ENCODE measurements at regions of chr11 and their contacts with region 1.

Region 1: DNA sequence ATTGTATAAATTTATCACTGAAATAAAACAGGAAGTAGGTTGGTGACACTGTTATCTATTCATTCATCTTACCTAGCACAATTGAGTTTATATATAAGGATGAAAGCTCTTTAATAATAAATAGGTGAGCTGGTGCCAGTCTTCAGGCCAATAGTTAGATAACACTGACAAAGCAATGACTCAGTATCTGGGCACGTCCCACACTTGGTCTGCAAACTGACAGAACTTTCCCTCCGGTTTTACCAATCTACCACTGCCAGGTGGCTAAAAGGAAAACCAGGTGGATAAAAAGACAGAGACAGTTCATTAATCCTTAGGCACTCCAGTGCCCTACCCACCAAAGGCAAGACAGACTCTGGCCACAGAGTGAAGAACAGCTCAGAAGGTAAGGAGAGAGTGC is 17.6 kb downstream of the DDB1 start:
- DNase-seq: no peak
- H3K4me3 ChIP-seq: no peak overlapping the region
- H3K27ac ChIP-seq: no peak overlapping the region
- H3K4me1 ChIP-seq: no peaks in the 10 kb centered on the region
- H3K27me3 ChIP-seq: no peaks in the 10 kb centered on the region
- CTCF ChIP-seq: no peak

Region 2: GRCh38 chr11:60334005-60334620 is 981.1 kb before region 1 on chr11:
- CTCF ChIA-PET with region 1: no interaction called
- POLR2A ChIA-PET with region 1: no interaction called
- intact Hi-C with region 1: no loop called
- DNase-seq: peak; percentile 73
- H3K4me3 ChIP-seq: no peak overlapping the region
- H3K27ac ChIP-seq: no peak overlapping the region
- H3K4me1 ChIP-seq: no peaks in the 10 kb centered on the region
- H3K27me3 ChIP-seq: no peaks in the 10 kb centered on the region
- CTCF ChIP-seq: peak; percentile 84

Region 3: GRCh38 chr11:60378354-60378753 is 936.9 kb before region 1 on chr11 and contains the start of gene MS4A7:
- CTCF ChIA-PET with region 1: no interaction called
- POLR2A ChIA-PET with region 1: no interaction called
- intact Hi-C with region 1: no loop called
- DNase-seq: no peak
- H3K4me3 ChIP-seq: no peak within 1 kb of the TSS
- H3K27ac ChIP-seq: no peak within 1 kb of the TSS
- H3K4me1 ChIP-seq: no peaks in the 10 kb centered on the region
- H3K27me3 ChIP-seq: peaks cover 19% of the 10 kb centered on the region
- CTCF ChIP-seq: no peak
- total RNA-seq, gene MS4A7: not detected in 2 replicates

Region 4: GRCh38 chr11:61277186-61278000 is 37.9 kb before region 1 on chr11:
- CTCF ChIA-PET with region 1: interaction called, 20 read pairs
- POLR2A ChIA-PET with region 1: no interaction called
- intact Hi-C with region 1: no loop called
- DNase-seq: no peak
- H3K4me3 ChIP-seq: no peak overlapping the region
- H3K27ac ChIP-seq: no peak overlapping the region
- H3K4me1 ChIP-seq: no peaks in the 10 kb centered on the region
- H3K27me3 ChIP-seq: no peaks in the 10 kb centered on the region
- CTCF ChIP-seq: no peak

Region 5: DNA sequence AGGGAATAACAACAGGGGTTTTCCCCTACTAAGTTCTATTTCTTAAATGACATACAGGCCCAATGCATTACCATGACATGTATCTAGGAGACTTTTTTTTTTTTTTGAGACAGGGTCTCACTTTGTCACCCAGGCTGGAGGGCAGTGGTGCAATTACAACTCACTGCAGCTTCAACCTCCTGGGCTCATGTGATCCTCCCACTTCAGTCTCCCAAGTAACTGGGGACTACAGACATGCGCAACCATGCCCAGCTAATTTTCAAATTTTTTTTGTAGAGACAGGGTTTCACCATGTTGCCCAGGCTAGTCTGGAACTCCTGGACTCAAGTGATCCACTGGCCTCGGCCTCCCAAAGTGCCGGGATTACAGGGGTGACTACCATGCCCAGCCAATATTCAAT is 107.0 kb after region 1 on chr11:
- CTCF ChIA-PET with region 1: no interaction called
- POLR2A ChIA-PET with region 1: no interaction called
- intact Hi-C with region 1: no loop called
- DNase-seq: no peak
- H3K4me3 ChIP-seq: no peak overlapping the region
- H3K27ac ChIP-seq: no peak overlapping the region
- H3K4me1 ChIP-seq: no peaks in the 10 kb centered on the region
- H3K27me3 ChIP-seq: no peaks in the 10 kb centered on the region
- CTCF ChIP-seq: no peak

Region 6: GRCh38 chr11:61460474-61460881 is 145.2 kb after region 1 on chr11:
- CTCF ChIA-PET with region 1: no interaction called
- POLR2A ChIA-PET with region 1: no interaction called
- intact Hi-C with region 1: no loop called
- DNase-seq: no peak
- H3K4me3 ChIP-seq: no peak overlapping the region
- H3K27ac ChIP-seq: no peak overlapping the region
- H3K4me1 ChIP-seq: peaks cover 7% of the 10 kb centered on the region
- H3K27me3 ChIP-seq: no peaks in the 10 kb centered on the region
- CTCF ChIP-seq: no peak